CD4-positive, alpha-beta T cell (primary cell): ENCODE measurements at regions of chr6 and their contacts with region 1.

Region 1: DNA sequence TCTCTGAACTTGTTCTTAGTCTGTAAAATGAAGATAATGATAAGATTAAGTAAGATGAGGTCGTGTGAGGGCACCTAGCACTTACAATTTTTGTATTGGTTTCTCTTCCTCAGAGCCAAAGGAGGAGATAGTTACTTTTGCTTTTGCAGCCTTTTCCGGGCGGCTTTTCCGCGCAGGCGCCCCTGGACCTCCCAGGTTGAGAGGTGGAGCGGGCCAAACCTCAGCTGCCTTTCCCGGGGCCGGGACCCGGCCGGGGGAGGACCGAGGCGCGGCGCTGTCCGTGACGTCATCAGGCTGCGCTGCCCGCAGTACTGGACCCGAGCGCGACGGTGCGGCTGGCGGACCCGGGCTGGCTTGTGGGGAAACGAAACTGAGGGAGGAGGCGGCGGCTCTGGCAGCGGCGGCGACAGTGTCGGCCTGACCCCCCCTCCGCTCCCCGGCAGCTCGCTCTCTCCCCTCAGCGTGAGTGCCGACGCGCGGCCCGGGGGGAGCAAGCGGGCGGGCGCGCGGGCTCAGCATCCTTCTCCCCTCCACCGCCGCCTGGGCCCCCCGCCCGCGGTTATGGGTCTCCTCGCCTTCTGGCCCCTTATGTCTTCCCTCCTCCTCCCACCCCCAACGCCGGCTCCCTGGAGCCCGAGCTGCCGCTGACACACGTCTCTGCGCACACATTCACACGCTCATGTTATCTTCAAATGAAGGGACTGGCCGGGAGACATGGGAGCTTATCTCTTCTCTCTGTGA is at the start of gene CMTR1:
- DNase-seq: peak; percentile 91 to 99 (median 96)
- ATAC-seq: peak; percentile 89
- H3K4me3 ChIP-seq: peak within 1 kb of the TSS; percentile 98
- H3K4me3 Mint-ChIP-seq: peak within 1 kb of the TSS; percentile 95
- H3K27ac ChIP-seq: peak within 1 kb of the TSS; percentile 91
- H3K27ac Mint-ChIP-seq: peak within 1 kb of the TSS; percentile 95
- H3K4me1 ChIP-seq: peaks cover 29% of the 10 kb centered on the region
- H3K4me1 Mint-ChIP-seq: peaks cover 45% of the 10 kb centered on the region
- H3K27me3 ChIP-seq: no peaks in the 10 kb centered on the region
- H3K27me3 Mint-ChIP-seq: peaks cover 6% of the 10 kb centered on the region
- CTCF ChIP-seq: no peak
- total RNA-seq, gene CMTR1: 79.7 to 80.3 TPM

Region 2: DNA sequence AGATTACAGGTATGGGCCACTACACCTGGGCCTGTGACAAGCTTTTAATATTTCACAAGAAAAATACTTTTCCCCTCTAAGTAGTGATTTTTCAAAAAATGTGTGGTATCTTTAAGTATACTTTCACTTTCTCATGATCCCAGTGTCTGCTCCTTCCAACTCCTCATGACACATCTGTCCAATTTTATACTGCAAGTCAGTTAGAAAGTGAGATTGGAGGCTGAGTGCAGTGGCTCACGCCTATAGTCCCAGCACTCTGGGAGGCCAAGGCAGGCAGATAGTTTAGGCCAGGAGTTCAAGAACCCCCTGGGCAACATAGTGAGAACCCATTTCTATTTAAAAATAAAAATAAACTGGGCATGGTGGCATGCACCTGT is 242.9 kb before region 1 on chr6:
- CTCF ChIA-PET with region 1: no interaction called
- POLR2A ChIA-PET with region 1: no interaction called
- intact Hi-C with region 1: no loop called
- DNase-seq: no peak
- ATAC-seq: no peak
- H3K4me3 ChIP-seq: no peak overlapping the region
- H3K4me3 Mint-ChIP-seq: no peak overlapping the region
- H3K27ac ChIP-seq: no peak overlapping the region
- H3K27ac Mint-ChIP-seq: no peak overlapping the region
- H3K4me1 ChIP-seq: peaks cover 49% of the 10 kb centered on the region
- H3K4me1 Mint-ChIP-seq: peaks cover 59% of the 10 kb centered on the region
- H3K27me3 ChIP-seq: no peaks in the 10 kb centered on the region
- H3K27me3 Mint-ChIP-seq: no peaks in the 10 kb centered on the region
- CTCF ChIP-seq: no peak

Region 3: DNA sequence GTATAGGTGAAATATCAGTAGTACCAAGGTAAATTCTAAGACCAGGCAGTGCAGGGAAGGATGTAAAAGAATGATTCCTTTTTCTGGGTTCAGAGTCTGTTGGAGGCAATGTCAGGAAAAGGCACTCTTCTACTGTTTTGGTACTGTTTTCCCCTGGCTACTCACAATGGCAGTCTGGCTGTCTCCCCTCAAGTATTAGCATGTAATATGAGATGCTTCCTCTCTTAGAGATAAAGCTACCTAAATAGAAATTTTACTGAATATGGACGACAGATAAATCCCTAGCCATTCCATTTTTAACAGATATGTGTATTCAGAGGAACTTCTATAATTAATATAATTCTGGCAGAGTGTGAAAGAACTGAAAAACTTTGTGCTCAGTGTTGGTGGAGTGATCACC is 75.8 kb before region 1 on chr6:
- CTCF ChIA-PET with region 1: no interaction called
- POLR2A ChIA-PET with region 1: interaction called, 7 read pairs
- intact Hi-C with region 1: loop called in 1 of 2 experiments (anchors 2 kb)
- DNase-seq: no peak
- ATAC-seq: no peak
- H3K4me3 ChIP-seq: no peak overlapping the region
- H3K4me3 Mint-ChIP-seq: peak overlapping the region; percentile 28
- H3K27ac ChIP-seq: no peak overlapping the region
- H3K27ac Mint-ChIP-seq: no peak overlapping the region
- H3K4me1 ChIP-seq: peaks cover 14% of the 10 kb centered on the region
- H3K4me1 Mint-ChIP-seq: peaks cover 40% of the 10 kb centered on the region
- H3K27me3 ChIP-seq: no peaks in the 10 kb centered on the region
- H3K27me3 Mint-ChIP-seq: no peaks in the 10 kb centered on the region
- CTCF ChIP-seq: no peak

Region 4: DNA sequence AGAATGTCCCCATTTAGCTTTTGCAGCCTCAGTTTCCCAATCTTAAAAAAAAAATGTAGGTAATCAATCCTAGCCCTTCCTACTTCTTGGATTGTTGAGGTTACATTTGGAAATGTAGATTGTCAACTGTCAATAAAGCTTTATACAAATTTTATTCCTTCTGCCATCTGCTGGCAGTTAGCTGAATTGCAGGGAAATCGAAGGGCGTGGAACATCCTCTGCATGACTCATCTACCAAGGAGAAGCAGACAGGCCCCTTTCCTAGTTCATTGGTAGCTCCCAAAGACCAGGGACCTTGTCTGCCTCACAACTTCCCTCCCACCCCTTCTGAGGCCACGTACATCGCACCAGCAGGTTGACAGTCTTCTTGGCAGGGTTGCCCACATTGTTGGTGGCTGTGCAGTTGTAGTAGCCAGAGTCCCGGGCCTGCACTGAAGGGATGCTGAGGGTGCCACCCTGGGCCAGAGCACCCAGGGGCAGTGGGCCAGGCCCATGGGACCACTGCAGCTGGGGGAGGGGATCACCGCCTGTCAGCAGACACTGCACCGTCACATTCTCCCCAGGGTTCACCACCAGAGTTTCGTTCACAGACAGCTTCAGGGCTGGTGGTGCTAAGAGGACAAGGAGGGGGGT is 221.0 kb after region 1 on chr6:
- CTCF ChIA-PET with region 1: no interaction called
- POLR2A ChIA-PET with region 1: no interaction called
- intact Hi-C with region 1: no loop called
- DNase-seq: peak in 11 of 14 experiments; percentile 8 to 65 (median 34)
- ATAC-seq: no peak
- H3K4me3 ChIP-seq: no peak overlapping the region
- H3K4me3 Mint-ChIP-seq: no peak overlapping the region
- H3K27ac ChIP-seq: no peak overlapping the region
- H3K27ac Mint-ChIP-seq: no peak overlapping the region
- H3K4me1 ChIP-seq: peaks cover 4% of the 10 kb centered on the region
- H3K4me1 Mint-ChIP-seq: peaks cover 19% of the 10 kb centered on the region
- H3K27me3 ChIP-seq: peaks cover 4 to 6% of the 10 kb centered on the region in 2 experiments
- H3K27me3 Mint-ChIP-seq: peaks cover 20% of the 10 kb centered on the region
- CTCF ChIP-seq: peak; percentile 51

Region 5: GRCh38 chr6:39108041-39108839 is 1675.2 kb after region 1 on chr6:
- CTCF ChIA-PET with region 1: no interaction called
- POLR2A ChIA-PET with region 1: no interaction called
- intact Hi-C with region 1: loop called in 1 of 2 experiments (anchors 5 kb)
- DNase-seq: no peak
- ATAC-seq: no peak
- H3K4me3 ChIP-seq: no peak overlapping the region
- H3K4me3 Mint-ChIP-seq: no peak overlapping the region
- H3K27ac ChIP-seq: no peak overlapping the region
- H3K27ac Mint-ChIP-seq: no peak overlapping the region
- H3K4me1 ChIP-seq: no peaks in the 10 kb centered on the region
- H3K4me1 Mint-ChIP-seq: peaks cover 55% of the 10 kb centered on the region
- H3K27me3 ChIP-seq: no peaks in the 10 kb centered on the region
- H3K27me3 Mint-ChIP-seq: no peaks in the 10 kb centered on the region
- CTCF ChIP-seq: no peak